ENCODE measurements at regions of chr6 and their contacts with region 1.

Region 1: GRCh38 chr6:157434349-157435033 is 53.5 kb downstream of the ZDHHC14 start:
- DNase-seq: peak; percentile 43 to 75
- ATAC-seq: peak; percentile 47 to 75
- H3K4me3 ChIP-seq: no peak overlapping the region
- H3K27ac ChIP-seq: peak overlapping the region; percentile 49 to 79 (median 70)
- H3K4me1 ChIP-seq: peaks cover 28 to 48% of the 10 kb centered on the region in 2 donors
- H3K27me3 ChIP-seq: no peaks in the 10 kb centered on the region
- CTCF ChIP-seq: no peak
- POLR2A ChIP-seq: no peak

Region 2: GRCh38 chr6:157535339-157536222 is 101.1 kb after region 1 on chr6:
- in situ Hi-C with region 1: no loop called
- intact Hi-C with region 1: loop called (anchors 2 kb)
- DNase-seq: no peak
- ATAC-seq: no peak
- H3K4me3 ChIP-seq: no peak overlapping the region
- H3K27ac ChIP-seq: peak overlapping the region; percentile 4 to 59 (median 32)
- H3K4me1 ChIP-seq: peaks cover 50 to 66% of the 10 kb centered on the region in 2 donors
- H3K27me3 ChIP-seq: no peaks in the 10 kb centered on the region
- CTCF ChIP-seq: no peak
- POLR2A ChIP-seq: no peak

Region 3: GRCh38 chr6:157563611-157564284 is 129.3 kb after region 1 on chr6:
- in situ Hi-C with region 1: no loop called
- intact Hi-C with region 1: no loop called
- DNase-seq: no peak
- ATAC-seq: no peak
- H3K4me3 ChIP-seq: no peak overlapping the region
- H3K27ac ChIP-seq: no peak overlapping the region
- H3K4me1 ChIP-seq: peaks cover 8 to 18% of the 10 kb centered on the region in 2 donors
- H3K27me3 ChIP-seq: no peaks in the 10 kb centered on the region
- CTCF ChIP-seq: no peak
- POLR2A ChIP-seq: no peak

Region 4: GRCh38 chr6:157823001-157823527 is 388.6 kb after region 1 on chr6 and contains the start of gene SNX9:
- in situ Hi-C with region 1: no loop called
- intact Hi-C with region 1: no loop called
- DNase-seq: peak; percentile 56 to 68
- ATAC-seq: peak; percentile 86 to 90
- H3K4me3 ChIP-seq: peak within 1 kb of the TSS; percentile 80 to 97 (median 88)
- H3K27ac ChIP-seq: peak within 1 kb of the TSS; percentile 82 to 96 (median 90)
- H3K4me1 ChIP-seq: peaks cover 15 to 34% of the 10 kb centered on the region in 2 donors
- H3K27me3 ChIP-seq: no peaks in the 10 kb centered on the region
- CTCF ChIP-seq: peak in 1 of 5 experiments; percentile 37
- POLR2A ChIP-seq: peak; percentile 73 to 82
- total RNA-seq, gene SNX9: 29.4 to 44.9 (median 33.3) TPM